CD4-positive, alpha-beta memory T cell (primary cell): ENCODE measurements at regions of chr2 and their contacts with region 1.

Region 1: GRCh38 chr2:3651691-3652648 is 6.0 kb upstream of the ALLC start:
- DNase-seq: peak; percentile 64 to 82 (median 80)
- H3K4me3 ChIP-seq: peak overlapping the region in 1 of 2 donors; percentile 65
- H3K4me3 Mint-ChIP-seq: peak overlapping the region; percentile 87 to 95 (median 92)
- H3K27ac ChIP-seq: peak overlapping the region; percentile 27
- H3K27ac Mint-ChIP-seq: peak overlapping the region; percentile 87 to 100 (median 96)
- H3K4me1 ChIP-seq: peaks cover 13% of the 10 kb centered on the region
- H3K4me1 Mint-ChIP-seq: peaks cover 8 to 18% (median 13%) of the 10 kb centered on the region in 4 donors
- H3K27me3 ChIP-seq: no peaks in the 10 kb centered on the region
- H3K27me3 Mint-ChIP-seq: peaks cover 0 to 3% of the 10 kb centered on the region in 2 donors

Region 2: GRCh38 chr2:1886405-1886992 is 1765.5 kb before region 1 on chr2:
- CTCF ChIA-PET with region 1: no interaction called
- POLR2A ChIA-PET with region 1: no interaction called
- intact Hi-C with region 1: loop called (anchors 5 kb)
- DNase-seq: peak in 2 of 5 donors; percentile 3 to 6
- H3K4me3 ChIP-seq: no peak overlapping the region
- H3K4me3 Mint-ChIP-seq: no peak overlapping the region
- H3K27ac ChIP-seq: no peak overlapping the region
- H3K27ac Mint-ChIP-seq: no peak overlapping the region
- H3K4me1 ChIP-seq: no peaks in the 10 kb centered on the region
- H3K4me1 Mint-ChIP-seq: peaks cover 0 to 2% (median 0%) of the 10 kb centered on the region in 4 donors
- H3K27me3 ChIP-seq: no peaks in the 10 kb centered on the region
- H3K27me3 Mint-ChIP-seq: peaks cover 4 to 10% of the 10 kb centered on the region in 2 donors

Region 3: DNA sequence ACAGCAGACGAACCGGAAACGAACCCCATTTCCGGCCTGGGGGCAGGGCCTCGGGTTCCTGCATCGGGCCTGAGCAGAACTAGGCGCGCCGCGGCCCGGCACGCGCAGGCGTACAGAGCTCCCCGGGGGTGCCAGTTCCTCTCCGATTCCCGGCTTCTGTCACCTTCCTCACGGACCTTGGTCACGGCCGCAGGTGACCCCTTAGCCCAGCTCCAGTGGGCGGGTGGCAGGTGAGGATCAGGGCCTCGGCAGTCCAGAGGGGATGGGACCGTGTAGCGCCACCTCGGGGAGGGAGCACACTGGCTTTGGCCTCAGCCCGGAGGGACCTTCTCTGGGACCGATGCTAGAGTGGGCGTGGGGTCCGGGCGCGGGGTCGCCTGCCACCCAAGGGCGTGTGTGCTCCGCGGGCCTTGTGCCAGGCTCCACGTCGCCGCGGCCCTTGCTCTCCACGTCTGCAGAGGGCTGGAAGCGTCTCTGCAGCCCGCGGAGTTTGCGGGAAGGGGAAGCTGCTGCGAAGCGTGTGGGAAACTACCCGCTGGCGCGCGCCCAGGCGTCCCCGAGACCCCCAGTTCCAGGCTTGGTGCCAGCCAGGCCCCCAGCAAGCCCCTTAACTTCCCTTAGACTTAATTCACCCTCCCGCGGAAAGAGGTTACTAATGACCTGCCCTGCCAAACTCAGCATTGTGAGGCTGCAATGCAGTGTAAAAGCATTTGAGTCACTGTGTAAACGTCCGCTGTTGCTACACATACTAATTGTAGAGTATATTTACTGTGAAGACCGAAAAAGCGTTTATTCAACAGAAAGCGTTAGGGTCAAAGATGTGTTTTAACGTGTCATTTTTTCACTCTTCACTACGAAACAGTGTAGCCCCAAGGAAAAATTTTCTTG is 272.1 kb before region 1 on chr2 and contains the start of gene TRAPPC12:
- CTCF ChIA-PET with region 1: interaction called, 10 read pairs
- POLR2A ChIA-PET with region 1: interaction called, 16 read pairs
- intact Hi-C with region 1: loop called (anchors 5 kb)
- DNase-seq: peak; percentile 90 to 93 (median 92)
- H3K4me3 ChIP-seq: peak within 1 kb of the TSS; percentile 88 to 90
- H3K4me3 Mint-ChIP-seq: peak within 1 kb of the TSS; percentile 92 to 99 (median 95)
- H3K27ac ChIP-seq: peak within 1 kb of the TSS; percentile 89
- H3K27ac Mint-ChIP-seq: peak within 1 kb of the TSS; percentile 94 to 99 (median 98)
- H3K4me1 ChIP-seq: peaks cover 40% of the 10 kb centered on the region
- H3K4me1 Mint-ChIP-seq: peaks cover 32 to 64% (median 46%) of the 10 kb centered on the region in 4 donors
- H3K27me3 ChIP-seq: no peaks in the 10 kb centered on the region
- H3K27me3 Mint-ChIP-seq: no peaks in the 10 kb centered on the region
- total RNA-seq, gene TRAPPC12: 134 to 137 TPM

Region 4: DNA sequence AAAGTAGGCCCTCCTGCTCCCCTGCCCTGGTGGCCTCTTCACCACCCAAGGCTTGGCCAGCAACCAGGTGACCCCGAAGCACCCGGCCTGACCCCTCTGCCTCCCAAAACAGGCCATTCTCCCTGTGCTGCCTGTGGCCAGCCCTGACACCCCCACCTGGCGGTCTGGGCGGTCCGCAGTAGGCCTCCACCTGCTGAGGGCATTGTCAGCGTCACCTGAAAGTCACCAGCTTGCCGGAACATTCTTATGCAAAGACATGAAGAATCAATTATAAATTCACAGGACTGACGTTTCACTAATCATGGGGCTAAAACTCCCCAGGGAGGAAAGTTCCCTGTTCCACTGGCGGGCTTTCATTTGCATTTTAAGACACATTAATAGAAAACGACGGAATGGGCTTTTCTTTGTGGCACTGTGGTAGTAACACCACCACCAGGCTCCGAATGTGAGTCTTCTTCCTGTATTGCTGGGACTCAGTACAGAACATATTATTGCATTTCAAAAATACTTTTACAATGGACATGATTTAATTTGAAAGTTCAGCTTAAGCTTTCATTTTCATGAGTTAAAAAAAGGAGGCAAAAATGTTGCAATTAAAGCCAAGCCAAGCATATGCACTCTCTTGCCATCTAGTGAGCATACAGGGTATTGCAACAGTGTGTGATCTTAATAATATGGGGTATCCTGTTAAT is 190.0 kb before region 1 on chr2:
- CTCF ChIA-PET with region 1: interaction called, 3 read pairs
- POLR2A ChIA-PET with region 1: no interaction called
- intact Hi-C with region 1: loop called (anchors 1 kb)
- DNase-seq: peak; percentile 40 to 57 (median 51)
- H3K4me3 ChIP-seq: no peak overlapping the region
- H3K4me3 Mint-ChIP-seq: no peak overlapping the region
- H3K27ac ChIP-seq: no peak overlapping the region
- H3K27ac Mint-ChIP-seq: peak overlapping the region; percentile 22 to 83 (median 66)
- H3K4me1 ChIP-seq: peaks cover 3% of the 10 kb centered on the region
- H3K4me1 Mint-ChIP-seq: peaks cover 1 to 6% (median 3%) of the 10 kb centered on the region in 4 donors
- H3K27me3 ChIP-seq: no peaks in the 10 kb centered on the region
- H3K27me3 Mint-ChIP-seq: no peaks in the 10 kb centered on the region

Region 5: GRCh38 chr2:3575534-3576262 is 76.3 kb before region 1 on chr2:
- CTCF ChIA-PET with region 1: interaction called, 9 read pairs
- POLR2A ChIA-PET with region 1: no interaction called
- intact Hi-C with region 1: loop called (anchors 1 kb)
- DNase-seq: peak; percentile 19 to 56 (median 49)
- H3K4me3 ChIP-seq: peak overlapping the region; percentile 65 to 67
- H3K4me3 Mint-ChIP-seq: peak overlapping the region; percentile 87 to 98 (median 92)
- H3K27ac ChIP-seq: peak overlapping the region; percentile 94
- H3K27ac Mint-ChIP-seq: peak overlapping the region; percentile 87 to 99 (median 97)
- H3K4me1 ChIP-seq: peaks cover 46% of the 10 kb centered on the region
- H3K4me1 Mint-ChIP-seq: peaks cover 33 to 49% (median 38%) of the 10 kb centered on the region in 4 donors
- H3K27me3 ChIP-seq: no peaks in the 10 kb centered on the region
- H3K27me3 Mint-ChIP-seq: no peaks in the 10 kb centered on the region

Region 6: DNA sequence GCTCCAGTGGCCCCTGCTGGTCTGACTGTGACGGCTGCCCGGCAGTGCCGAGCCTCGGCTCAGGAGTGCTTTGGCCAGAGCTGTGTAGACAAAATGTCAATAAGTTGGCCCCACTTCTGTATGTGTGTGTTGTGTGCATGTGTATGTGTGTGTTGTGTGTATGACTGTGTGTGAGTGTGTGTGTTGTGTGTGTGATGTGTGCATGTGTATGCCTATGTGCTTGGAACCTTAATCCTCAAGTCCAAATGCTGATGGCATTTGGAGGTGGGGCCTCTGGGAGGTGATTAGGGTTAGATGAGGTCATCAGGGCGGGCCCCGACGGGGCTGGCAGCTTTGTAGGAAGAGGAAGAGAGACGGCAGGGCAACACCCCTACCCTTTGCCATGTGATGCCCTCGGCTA is 320.4 kb after region 1 on chr2:
- CTCF ChIA-PET with region 1: no interaction called
- POLR2A ChIA-PET with region 1: no interaction called
- intact Hi-C with region 1: no loop called
- DNase-seq: no peak
- H3K4me3 ChIP-seq: no peak overlapping the region
- H3K4me3 Mint-ChIP-seq: no peak overlapping the region
- H3K27ac ChIP-seq: no peak overlapping the region
- H3K27ac Mint-ChIP-seq: no peak overlapping the region
- H3K4me1 ChIP-seq: no peaks in the 10 kb centered on the region
- H3K4me1 Mint-ChIP-seq: no peaks in the 10 kb centered on the region
- H3K27me3 ChIP-seq: no peaks in the 10 kb centered on the region
- H3K27me3 Mint-ChIP-seq: no peaks in the 10 kb centered on the region